Mucosa of descending colon (tissue), 3 donors: ENCODE measurements at regions of chr15 and their contacts with region 1.

Region 1: DNA sequence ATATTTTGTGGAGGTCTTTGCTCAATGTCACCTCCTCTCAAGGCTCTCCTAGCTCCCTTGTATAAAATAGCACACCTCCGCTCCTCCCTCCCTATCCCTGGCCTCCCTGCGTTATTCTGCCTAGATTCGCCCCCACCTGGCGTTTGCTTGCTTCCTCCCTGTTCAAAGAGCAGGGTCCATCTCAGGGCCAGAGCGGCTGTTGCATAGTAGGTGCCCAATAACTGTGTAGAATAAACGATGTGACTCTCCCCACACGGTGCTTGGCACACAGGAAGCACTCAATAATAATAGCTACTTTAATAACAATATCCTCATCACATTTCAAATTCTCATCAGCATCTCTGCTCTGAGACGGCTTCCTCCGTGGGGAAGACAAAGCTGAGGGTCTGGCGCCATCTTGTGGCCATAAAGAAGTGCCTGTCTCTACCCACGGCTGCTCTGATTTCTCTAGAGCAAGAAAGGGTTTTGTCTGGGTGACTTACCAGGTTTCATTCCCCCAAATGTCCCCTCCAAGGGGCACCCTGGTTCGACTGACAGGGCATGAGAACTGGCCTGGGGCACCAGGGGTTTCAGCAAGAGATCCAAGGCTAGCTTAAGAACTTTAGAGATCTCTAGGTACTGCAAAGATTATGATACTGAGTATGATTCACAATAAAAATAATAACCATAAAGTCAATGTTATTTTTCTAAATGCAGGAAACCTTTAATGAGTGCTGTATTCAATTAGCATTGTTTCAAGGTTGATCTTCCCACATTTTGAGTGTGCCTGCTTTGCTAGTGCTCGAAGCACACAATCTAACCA is 16.1 kb downstream of the CD276 start:
- DNase-seq: peak in 2 of 3 donors; percentile 75 to 91
- ATAC-seq: peak; percentile 72
- H3K4me3 ChIP-seq: no peak overlapping the region
- H3K4me1 ChIP-seq: peaks cover 7% of the 10 kb centered on the region
- CTCF ChIP-seq: peak; percentile 78

Region 2: GRCh38 chr15:73142802-73143762 is 557.2 kb before region 1 on chr15:
- intact Hi-C with region 1: no loop called
- DNase-seq: no peak
- ATAC-seq: peak; percentile 69
- H3K4me3 ChIP-seq: no peak overlapping the region
- H3K4me1 ChIP-seq: no peaks in the 10 kb centered on the region
- CTCF ChIP-seq: no peak

Region 3: GRCh38 chr15:73560501-73561117 is 139.6 kb before region 1 on chr15:
- intact Hi-C with region 1: loop called in 1 of 2 experiments (anchors 10 kb)
- DNase-seq: peak in 1 of 3 donors; percentile 70
- ATAC-seq: peak; percentile 80
- H3K4me3 ChIP-seq: no peak overlapping the region
- H3K4me1 ChIP-seq: no peaks in the 10 kb centered on the region
- CTCF ChIP-seq: peak; percentile 22

Region 4: GRCh38 chr15:73677146-73677607 is 23.1 kb before region 1 on chr15:
- intact Hi-C with region 1: loop called (anchors 2 kb)
- DNase-seq: peak in 2 of 3 donors; percentile 52 to 90
- ATAC-seq: peak; percentile 92
- H3K4me3 ChIP-seq: no peak overlapping the region
- H3K4me1 ChIP-seq: no peaks in the 10 kb centered on the region
- CTCF ChIP-seq: peak; percentile 65